Left ventricle myocardium inferior (tissue), 1 donor: ENCODE measurements at regions of chr14 and their contacts with region 1.

Region 1: GRCh38 chr14:90235179-90235976 is 21.0 kb upstream of the PSMC1 start:
- DNase-seq: peak; percentile 51
- H3K4me3 ChIP-seq: no peak overlapping the region
- H3K27ac ChIP-seq: no peak overlapping the region
- H3K4me1 ChIP-seq: peaks cover 3% of the 10 kb centered on the region
- H3K27me3 ChIP-seq: peaks cover 7% of the 10 kb centered on the region
- CTCF ChIP-seq: peak; percentile 92

Region 2: DNA sequence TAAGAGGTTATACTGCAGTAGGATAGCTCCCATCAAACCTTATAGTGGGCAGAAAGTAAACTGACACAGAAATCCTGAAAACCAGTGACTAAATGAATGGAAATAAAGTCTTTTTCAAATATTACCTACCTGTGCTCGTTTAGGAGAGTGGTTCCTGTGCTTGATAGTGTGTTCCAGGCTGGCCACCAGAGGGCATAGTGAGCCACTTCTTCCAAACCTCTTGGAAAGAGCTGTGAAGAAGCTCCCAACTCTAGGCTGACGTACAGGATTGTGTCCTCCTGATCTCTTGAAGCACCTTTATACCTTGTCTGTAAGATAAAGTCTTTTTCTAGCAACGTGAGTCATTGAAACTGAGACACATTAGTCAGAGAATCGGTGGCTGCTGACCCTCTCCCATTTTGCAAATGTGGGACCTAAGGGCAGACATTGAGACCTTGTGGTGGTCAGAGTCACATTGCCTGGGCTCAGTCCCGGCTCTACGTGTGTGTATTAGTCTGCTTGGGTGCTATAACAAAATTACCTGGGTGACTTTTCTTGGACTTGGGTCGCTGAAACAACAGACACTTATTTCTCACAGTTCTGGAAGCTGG is 262.0 kb before region 1 on chr14:
- intact Hi-C with region 1: loop called (anchors 10 kb)
- DNase-seq: peak; percentile 38
- H3K4me3 ChIP-seq: no peak overlapping the region
- H3K27ac ChIP-seq: no peak overlapping the region
- H3K4me1 ChIP-seq: no peaks in the 10 kb centered on the region
- H3K27me3 ChIP-seq: no peaks in the 10 kb centered on the region
- CTCF ChIP-seq: peak; percentile 89